GM12878 (cell line): ENCODE measurements at regions of chr1 and their contacts with region 1.

Region 1: DNA sequence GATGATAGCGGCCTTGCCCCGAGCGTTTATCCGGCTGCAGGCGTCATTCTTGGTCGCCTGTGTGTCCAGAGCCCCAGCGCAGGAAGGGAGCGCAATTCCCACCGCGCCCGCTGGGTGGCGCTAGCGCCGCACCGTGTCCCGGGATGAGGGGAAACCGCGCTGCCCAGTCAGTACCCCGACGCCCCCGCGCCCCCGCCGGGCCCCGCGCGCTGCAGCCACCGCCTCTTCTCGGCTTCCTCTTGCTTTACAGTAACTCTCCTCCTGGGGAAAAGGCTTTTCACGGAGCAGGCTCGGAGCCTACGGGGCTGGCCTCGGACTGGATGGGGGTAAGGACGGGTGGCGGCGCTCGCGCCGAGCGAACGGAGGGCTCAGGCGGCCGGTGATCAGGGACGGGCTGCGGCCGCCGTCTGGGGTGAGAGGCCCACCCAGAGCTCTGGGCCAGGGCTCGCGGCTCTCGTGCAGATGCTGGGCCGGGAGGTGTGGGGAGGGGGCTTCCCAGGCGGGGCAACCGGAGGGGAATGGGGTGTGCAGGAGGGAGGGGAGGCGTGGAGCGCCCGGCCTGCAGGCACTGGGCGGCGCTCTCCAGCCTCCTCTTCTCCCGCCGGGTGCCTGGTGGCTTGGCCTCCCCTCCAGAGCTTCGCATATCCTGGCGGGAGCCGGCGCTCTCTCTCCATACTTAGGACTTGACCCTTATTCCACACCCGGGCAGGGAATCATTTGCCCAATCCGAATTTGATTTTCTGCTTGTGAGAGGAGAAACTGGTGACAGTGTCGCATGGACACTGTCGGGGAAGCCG is 29.8 kb downstream of the TEX35 start:
- DNase-seq: peak; percentile 52
- ATAC-seq: peak; percentile 94
- H3K4me3 ChIP-seq: peak overlapping the region; percentile 80
- H3K27ac ChIP-seq: peak overlapping the region; percentile 82
- H3K4me1 ChIP-seq: peaks cover 7% of the 10 kb centered on the region
- H3K27me3 ChIP-seq: no peaks in the 10 kb centered on the region
- CTCF ChIP-seq: peak; percentile 77 to 90 (median 81)
- EP300 ChIP-seq: no peak
- POLR2A ChIP-seq: no peak; the same call in 1 of the 2 replicates
- RAD21 ChIP-seq: peak; percentile 77

Region 2: DNA sequence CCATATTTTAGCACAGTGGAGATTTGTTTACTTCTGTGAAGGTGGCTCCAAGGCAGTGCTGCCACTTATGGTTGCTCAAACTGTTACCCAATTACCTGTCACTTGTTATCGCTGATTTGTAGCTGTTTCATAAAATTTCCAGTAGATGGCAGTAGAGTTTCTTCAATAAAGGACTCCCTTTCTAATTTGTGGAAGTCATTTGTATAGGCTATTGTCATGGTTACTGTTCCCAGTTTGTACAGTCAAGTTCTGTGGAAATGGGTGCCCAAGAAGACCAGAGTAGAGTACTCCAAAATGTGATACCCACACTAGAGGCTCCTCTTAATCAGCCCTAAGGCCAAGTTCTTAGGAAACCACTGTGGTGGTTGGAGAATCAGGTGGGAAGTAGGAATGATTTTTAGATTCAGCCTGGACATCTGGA is 232.1 kb before region 1 on chr1:
- CTCF ChIA-PET with region 1: interaction called, 13 read pairs
- POLR2A ChIA-PET with region 1: no interaction called
- RAD21 ChIA-PET with region 1: no interaction called
- SMC1A ChIA-PET with region 1: no interaction called
- in situ Hi-C with region 1: no loop called
- intact Hi-C with region 1: no loop called
- DNase-seq: peak; percentile 20
- ATAC-seq: peak; percentile 81
- H3K4me3 ChIP-seq: no peak overlapping the region
- H3K27ac ChIP-seq: no peak overlapping the region
- H3K4me1 ChIP-seq: no peaks in the 10 kb centered on the region
- H3K27me3 ChIP-seq: no peaks in the 10 kb centered on the region
- CTCF ChIP-seq: peak; percentile 57 to 71 (median 69)
- EP300 ChIP-seq: no peak
- POLR2A ChIP-seq: no peak
- RAD21 ChIP-seq: peak; percentile 64

Region 3: GRCh38 chr1:178438432-178438831 is 104.3 kb before region 1 on chr1:
- CTCF ChIA-PET with region 1: no interaction called
- POLR2A ChIA-PET with region 1: no interaction called
- RAD21 ChIA-PET with region 1: no interaction called
- SMC1A ChIA-PET with region 1: no interaction called
- in situ Hi-C with region 1: no loop called
- intact Hi-C with region 1: no loop called
- DNase-seq: no peak
- ATAC-seq: no peak
- H3K4me3 ChIP-seq: no peak overlapping the region
- H3K27ac ChIP-seq: no peak overlapping the region
- H3K4me1 ChIP-seq: no peaks in the 10 kb centered on the region
- H3K27me3 ChIP-seq: peaks cover 0 to 2% of the 10 kb centered on the region in 2 experiments; a peak in 1 of 4 replicates
- CTCF ChIP-seq: no peak
- EP300 ChIP-seq: no peak
- POLR2A ChIP-seq: no peak
- RAD21 ChIP-seq: no peak

Region 4: GRCh38 chr1:178465011-178465410 is 77.7 kb before region 1 on chr1:
- CTCF ChIA-PET with region 1: no interaction called
- POLR2A ChIA-PET with region 1: no interaction called
- RAD21 ChIA-PET with region 1: no interaction called
- SMC1A ChIA-PET with region 1: no interaction called
- in situ Hi-C with region 1: no loop called
- intact Hi-C with region 1: no loop called
- DNase-seq: no peak
- ATAC-seq: no peak
- H3K4me3 ChIP-seq: no peak overlapping the region
- H3K27ac ChIP-seq: no peak overlapping the region
- H3K4me1 ChIP-seq: no peaks in the 10 kb centered on the region
- H3K27me3 ChIP-seq: no peaks in the 10 kb centered on the region
- CTCF ChIP-seq: no peak
- EP300 ChIP-seq: no peak
- POLR2A ChIP-seq: no peak
- RAD21 ChIP-seq: no peak

Region 5: DNA sequence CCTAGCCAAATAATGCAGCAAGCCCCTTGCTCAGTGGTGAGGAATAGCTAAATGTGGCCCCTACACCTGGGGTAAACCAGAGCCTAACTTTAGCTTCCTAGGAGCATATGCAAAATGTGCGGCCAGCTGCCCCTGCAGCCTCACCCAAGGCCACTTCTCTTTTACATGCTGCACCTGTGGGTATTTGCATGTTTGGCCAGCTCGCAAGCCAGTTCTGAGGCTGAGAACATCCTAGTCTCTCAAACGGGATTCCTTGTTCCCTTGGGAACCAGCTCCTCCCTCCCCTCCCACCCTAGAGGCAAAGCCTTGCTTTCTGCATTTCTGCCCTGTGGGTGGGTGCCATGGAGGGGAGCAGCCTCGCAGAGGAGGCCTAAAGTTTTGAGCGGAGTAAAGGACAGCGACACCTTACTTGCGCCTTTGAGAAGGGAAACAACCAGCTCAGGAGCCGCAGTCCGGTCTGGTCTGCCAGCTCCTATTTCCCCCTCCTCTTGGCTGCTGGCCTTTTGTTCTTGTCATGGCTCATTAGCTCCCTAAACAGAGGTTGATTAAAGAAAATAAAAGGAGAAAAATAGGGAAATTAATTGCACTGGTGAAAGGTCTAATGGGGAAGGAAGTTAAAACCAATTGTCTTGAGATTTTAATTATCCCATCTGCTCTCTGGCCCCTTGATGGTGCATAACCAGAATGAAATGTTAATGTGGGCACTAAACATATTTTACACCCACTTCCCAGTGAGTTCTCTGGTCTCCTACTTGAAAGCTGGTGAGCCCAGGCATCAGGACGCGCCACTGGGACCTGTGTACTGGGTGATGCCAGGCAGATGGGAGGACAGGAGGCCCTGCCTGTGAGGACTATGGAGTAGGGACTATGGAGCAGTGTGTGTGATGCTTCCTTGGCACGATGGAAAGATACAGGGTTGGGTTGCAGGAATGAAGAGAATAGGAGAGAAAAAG is 38.9 kb after region 1 on chr1:
- CTCF ChIA-PET with region 1: interaction called, 10 read pairs
- POLR2A ChIA-PET with region 1: no interaction called
- RAD21 ChIA-PET with region 1: interaction called, 13 read pairs
- SMC1A ChIA-PET with region 1: interaction called, 9 read pairs
- in situ Hi-C with region 1: no loop called
- intact Hi-C with region 1: no loop called
- DNase-seq: peak; percentile 72
- ATAC-seq: peak; percentile 84
- H3K4me3 ChIP-seq: peak overlapping the region; percentile 46; the same call in 1 of the 2 replicates
- H3K27ac ChIP-seq: peak overlapping the region; percentile 62
- H3K4me1 ChIP-seq: peaks cover 61% of the 10 kb centered on the region
- H3K27me3 ChIP-seq: no peaks in the 10 kb centered on the region
- CTCF ChIP-seq: no peak
- EP300 ChIP-seq: no peak
- POLR2A ChIP-seq: no peak
- RAD21 ChIP-seq: no peak

Region 6: GRCh38 chr1:178664278-178664677 is 121.5 kb after region 1 on chr1:
- CTCF ChIA-PET with region 1: interaction called, 3 read pairs
- POLR2A ChIA-PET with region 1: no interaction called
- RAD21 ChIA-PET with region 1: interaction called, 10 read pairs
- SMC1A ChIA-PET with region 1: interaction called, 10 read pairs
- in situ Hi-C with region 1: no loop called
- intact Hi-C with region 1: loop called (anchors 10 kb)
- DNase-seq: peak; percentile 79
- ATAC-seq: peak; percentile 80
- H3K4me3 ChIP-seq: no peak overlapping the region
- H3K27ac ChIP-seq: no peak overlapping the region
- H3K4me1 ChIP-seq: peaks cover 30% of the 10 kb centered on the region
- H3K27me3 ChIP-seq: no peaks in the 10 kb centered on the region
- CTCF ChIP-seq: no peak
- EP300 ChIP-seq: no peak
- POLR2A ChIP-seq: no peak
- RAD21 ChIP-seq: no peak

Region 7: GRCh38 chr1:178749581-178750166 is 206.9 kb after region 1 on chr1:
- CTCF ChIA-PET with region 1: interaction called, 283 read pairs
- POLR2A ChIA-PET with region 1: interaction called, 3 read pairs
- RAD21 ChIA-PET with region 1: interaction called, 200 read pairs
- SMC1A ChIA-PET with region 1: interaction called, 166 read pairs
- in situ Hi-C with region 1: loop called (anchors 25 kb)
- intact Hi-C with region 1: loop called (anchors 1 kb)
- DNase-seq: no peak
- ATAC-seq: no peak
- H3K4me3 ChIP-seq: no peak overlapping the region
- H3K27ac ChIP-seq: no peak overlapping the region
- H3K4me1 ChIP-seq: no peaks in the 10 kb centered on the region
- H3K27me3 ChIP-seq: no peaks in the 10 kb centered on the region
- CTCF ChIP-seq: no peak
- EP300 ChIP-seq: no peak
- POLR2A ChIP-seq: no peak
- RAD21 ChIP-seq: no peak

Region 8: DNA sequence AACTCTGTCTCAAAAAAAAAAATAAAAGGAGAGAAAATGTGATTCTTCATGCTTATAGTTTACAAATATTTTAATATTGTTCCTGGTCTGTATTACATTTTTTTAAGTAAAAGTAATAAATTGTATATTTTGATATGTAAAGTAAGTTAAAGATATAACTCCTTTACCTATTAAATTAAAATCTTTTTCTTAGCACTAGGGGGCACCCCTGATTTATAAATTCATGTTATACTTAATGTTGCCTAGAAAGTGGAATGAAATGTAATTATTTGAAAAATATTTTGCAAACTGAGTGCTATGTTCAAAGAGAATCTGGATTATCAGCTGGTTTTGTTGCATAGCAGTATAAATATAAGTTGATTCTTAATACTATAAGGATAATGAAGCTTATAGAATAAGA is 231.5 kb after region 1 on chr1:
- CTCF ChIA-PET with region 1: interaction called, 22 read pairs
- POLR2A ChIA-PET with region 1: no interaction called
- RAD21 ChIA-PET with region 1: interaction called, 3 read pairs
- SMC1A ChIA-PET with region 1: interaction called, 3 read pairs
- in situ Hi-C with region 1: loop called (anchors 25 kb)
- intact Hi-C with region 1: no loop called
- DNase-seq: no peak
- ATAC-seq: no peak
- H3K4me3 ChIP-seq: no peak overlapping the region
- H3K27ac ChIP-seq: no peak overlapping the region
- H3K4me1 ChIP-seq: no peaks in the 10 kb centered on the region
- H3K27me3 ChIP-seq: no peaks in the 10 kb centered on the region
- CTCF ChIP-seq: peak in 1 of 3 experiments; percentile 17; a peak in 1 of 6 replicates
- EP300 ChIP-seq: no peak
- POLR2A ChIP-seq: no peak
- RAD21 ChIP-seq: 0 out of 2 replicates have a peak, but pooled peaks have one; percentile 33

Region 9: GRCh38 chr1:179002552-179003345 is 460.0 kb after region 1 on chr1:
- CTCF ChIA-PET with region 1: interaction called, 83 read pairs
- POLR2A ChIA-PET with region 1: interaction called, 5 read pairs
- RAD21 ChIA-PET with region 1: interaction called, 33 read pairs
- SMC1A ChIA-PET with region 1: interaction called, 25 read pairs
- in situ Hi-C with region 1: no loop called
- intact Hi-C with region 1: loop called (anchors 1 kb)
- DNase-seq: no peak
- ATAC-seq: peak; percentile 95
- H3K4me3 ChIP-seq: no peak overlapping the region
- H3K27ac ChIP-seq: no peak overlapping the region
- H3K4me1 ChIP-seq: no peaks in the 10 kb centered on the region
- H3K27me3 ChIP-seq: no peaks in the 10 kb centered on the region
- CTCF ChIP-seq: peak; percentile 95 to 97 (median 96); a peak in 5 of 6 replicates
- EP300 ChIP-seq: no peak
- POLR2A ChIP-seq: no peak
- RAD21 ChIP-seq: peak; percentile 98